ENCODE measurements at regions of chr1 and their contacts with region 1.

Region 1: GRCh38 chr1:197924516-197925123 is 7.4 kb downstream of the LHX9 start:
- DNase-seq: peak; percentile 61 to 79 (median 68)
- ATAC-seq: peak; percentile 80
- H3K4me3 ChIP-seq: no peak overlapping the region
- H3K27ac ChIP-seq: no peak overlapping the region
- H3K4me1 ChIP-seq: peaks cover 3 to 10% of the 10 kb centered on the region in 2 experiments; a peak in 3 of 5 replicates
- H3K27me3 ChIP-seq: peaks cover 19 to 26% of the 10 kb centered on the region in 2 experiments
- CTCF ChIP-seq: peak; percentile 80 to 92 (median 84)
- EP300 ChIP-seq: no peak
- POLR2A ChIP-seq: no peak
- RAD21 ChIP-seq: peak; percentile 88 to 93

Region 2: GRCh38 chr1:197339106-197340060 is 585.2 kb before region 1 on chr1:
- CTCF ChIA-PET with region 1: no interaction called
- POLR2A ChIA-PET with region 1: no interaction called
- in situ Hi-C with region 1: no loop called
- intact Hi-C with region 1: loop called (anchors 10 kb)
- DNase-seq: peak in 1 of 4 experiments; percentile 47
- ATAC-seq: peak; percentile 59
- H3K4me3 ChIP-seq: no peak overlapping the region
- H3K27ac ChIP-seq: no peak overlapping the region
- H3K4me1 ChIP-seq: peaks cover 0 to 2% of the 10 kb centered on the region in 2 experiments; a peak in 1 of 5 replicates
- H3K27me3 ChIP-seq: no peaks in the 10 kb centered on the region
- CTCF ChIP-seq: no peak
- EP300 ChIP-seq: no peak
- POLR2A ChIP-seq: no peak
- RAD21 ChIP-seq: no peak

Region 3: GRCh38 chr1:197526736-197527371 is 397.8 kb before region 1 on chr1:
- CTCF ChIA-PET with region 1: interaction called, 23 read pairs
- POLR2A ChIA-PET with region 1: no interaction called
- in situ Hi-C with region 1: loop called (anchors 5 kb)
- intact Hi-C with region 1: loop called (anchors 1 kb)
- DNase-seq: peak; percentile 21 to 55 (median 26)
- ATAC-seq: no peak
- H3K4me3 ChIP-seq: no peak overlapping the region
- H3K27ac ChIP-seq: no peak overlapping the region
- H3K4me1 ChIP-seq: no peaks in the 10 kb centered on the region
- H3K27me3 ChIP-seq: no peaks in the 10 kb centered on the region
- CTCF ChIP-seq: peak in 2 of 3 experiments; percentile 23 to 71; a peak in 3 of 6 replicates
- EP300 ChIP-seq: no peak
- POLR2A ChIP-seq: no peak
- RAD21 ChIP-seq: peak; percentile 62 to 73

Region 4: DNA sequence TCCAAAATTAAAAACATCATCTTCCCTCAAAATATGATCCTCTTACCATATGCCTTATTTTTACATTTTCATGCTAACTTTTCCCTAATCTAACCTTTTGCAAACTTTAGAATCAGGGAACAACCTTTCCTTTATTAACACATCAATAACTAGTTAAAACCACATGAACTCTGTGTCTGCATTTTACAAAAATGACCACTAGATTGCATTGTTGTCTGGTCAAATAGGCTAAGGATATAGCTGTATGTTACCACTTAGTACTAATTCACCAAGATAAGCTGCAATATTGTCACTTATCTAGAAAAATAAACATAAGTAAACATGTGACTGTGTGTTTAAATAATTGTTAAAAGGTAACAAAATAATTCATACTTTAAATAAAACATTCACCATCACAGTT is 231.7 kb before region 1 on chr1:
- CTCF ChIA-PET with region 1: interaction called, 3 read pairs
- POLR2A ChIA-PET with region 1: no interaction called
- in situ Hi-C with region 1: no loop called
- intact Hi-C with region 1: loop called (anchors 2 kb)
- DNase-seq: peak in 1 of 4 experiments; percentile 17
- ATAC-seq: peak; percentile 80
- H3K4me3 ChIP-seq: no peak overlapping the region
- H3K27ac ChIP-seq: no peak overlapping the region
- H3K4me1 ChIP-seq: no peaks in the 10 kb centered on the region
- H3K27me3 ChIP-seq: no peaks in the 10 kb centered on the region
- CTCF ChIP-seq: peak in 2 of 3 experiments; percentile 25 to 60; a peak in 3 of 6 replicates
- EP300 ChIP-seq: no peak
- POLR2A ChIP-seq: no peak
- RAD21 ChIP-seq: peak; percentile 72 to 82

Region 5: GRCh38 chr1:197799271-197799670 is 125.3 kb before region 1 on chr1:
- CTCF ChIA-PET with region 1: no interaction called
- POLR2A ChIA-PET with region 1: no interaction called
- in situ Hi-C with region 1: no loop called
- intact Hi-C with region 1: no loop called
- DNase-seq: no peak
- ATAC-seq: no peak
- H3K4me3 ChIP-seq: no peak overlapping the region
- H3K27ac ChIP-seq: no peak overlapping the region
- H3K4me1 ChIP-seq: no peaks in the 10 kb centered on the region
- H3K27me3 ChIP-seq: no peaks in the 10 kb centered on the region; a peak in 1 of 5 replicates
- CTCF ChIP-seq: no peak
- EP300 ChIP-seq: no peak
- POLR2A ChIP-seq: no peak
- RAD21 ChIP-seq: no peak

Region 6: GRCh38 chr1:198359024-198359653 is 434.5 kb after region 1 on chr1:
- CTCF ChIA-PET with region 1: no interaction called
- POLR2A ChIA-PET with region 1: no interaction called
- in situ Hi-C with region 1: no loop called
- intact Hi-C with region 1: loop called (anchors 10 kb)
- DNase-seq: peak in 1 of 4 experiments; percentile 36
- ATAC-seq: peak; percentile 75
- H3K4me3 ChIP-seq: no peak overlapping the region
- H3K27ac ChIP-seq: no peak overlapping the region
- H3K4me1 ChIP-seq: no peaks in the 10 kb centered on the region
- H3K27me3 ChIP-seq: no peaks in the 10 kb centered on the region
- CTCF ChIP-seq: peak; percentile 43 to 56 (median 47); a peak in 5 of 6 replicates
- EP300 ChIP-seq: no peak
- POLR2A ChIP-seq: no peak
- RAD21 ChIP-seq: peak; percentile 62 to 74